Activated naive CD8-positive, alpha-beta T cell treated with anti-CD3 and anti-CD28 coated beads, Interleukin-2, amount 10 ng/mL, durations not matched to agents 7 days and 5 days (primary cell): ENCODE measurements at regions of chr15 and their contacts with region 1.

Region 1: GRCh38 chr15:74382004-74382816 is 14.8 kb upstream of the CYP11A1 start:
- DNase-seq: peak; percentile 89
- ATAC-seq: peak; percentile 45
- H3K4me3 Mint-ChIP-seq: no peak overlapping the region
- H3K27ac Mint-ChIP-seq: peak overlapping the region; percentile 76
- H3K4me1 Mint-ChIP-seq: peaks cover 53% of the 10 kb centered on the region
- H3K27me3 Mint-ChIP-seq: no peaks in the 10 kb centered on the region

Region 2: GRCh38 chr15:74345051-74345450 is 37.2 kb before region 1 on chr15:
- POLR2A ChIA-PET with region 1: no interaction called
- DNase-seq: no peak
- ATAC-seq: no peak
- H3K4me3 Mint-ChIP-seq: no peak overlapping the region
- H3K27ac Mint-ChIP-seq: no peak overlapping the region
- H3K4me1 Mint-ChIP-seq: peaks cover 8% of the 10 kb centered on the region
- H3K27me3 Mint-ChIP-seq: peaks cover 5% of the 10 kb centered on the region

Region 3: DNA sequence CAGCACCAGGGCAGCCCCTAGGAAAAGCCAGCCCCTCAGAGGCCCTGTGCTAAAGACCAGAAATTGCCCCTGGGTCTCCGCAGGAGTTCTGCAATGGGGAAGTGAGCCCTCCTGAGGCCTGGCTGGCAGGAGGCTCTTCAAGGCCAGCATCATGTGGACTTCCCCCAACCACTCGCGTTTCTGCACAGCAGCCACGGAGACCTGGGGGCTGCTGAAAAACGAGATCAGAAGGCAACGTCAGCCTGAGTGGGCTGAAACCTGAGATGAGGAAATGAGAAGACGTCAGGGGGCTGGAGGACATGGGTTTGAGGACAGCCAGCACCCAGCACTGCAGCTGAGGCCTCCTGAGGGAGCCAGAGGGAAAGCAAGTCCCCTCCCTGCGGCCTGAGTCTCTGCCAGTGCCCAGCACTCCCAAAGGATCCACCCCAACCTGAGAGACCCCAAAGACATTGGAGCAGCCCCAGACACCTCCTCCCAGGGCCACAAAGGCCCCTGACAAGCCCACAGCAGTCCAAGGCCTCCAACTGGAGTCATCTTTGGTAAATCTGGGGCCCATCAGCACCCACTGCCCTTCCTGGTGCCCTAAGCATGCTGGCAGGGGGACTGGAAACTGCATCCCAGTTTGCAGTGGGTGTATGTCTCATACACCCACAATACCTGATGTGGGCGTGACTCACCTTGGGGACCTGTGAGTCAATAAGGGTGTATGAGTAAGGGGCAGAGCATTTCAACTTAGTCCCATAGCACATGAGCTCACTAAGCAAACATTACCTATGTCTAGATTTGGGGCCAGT is 14.4 kb after region 1 on chr15:
- POLR2A ChIA-PET with region 1: interaction called, 109 read pairs
- DNase-seq: no peak
- ATAC-seq: no peak
- H3K4me3 Mint-ChIP-seq: no peak overlapping the region
- H3K27ac Mint-ChIP-seq: peak overlapping the region; percentile 90
- H3K4me1 Mint-ChIP-seq: peaks cover 72% of the 10 kb centered on the region
- H3K27me3 Mint-ChIP-seq: no peaks in the 10 kb centered on the region

Region 4: DNA sequence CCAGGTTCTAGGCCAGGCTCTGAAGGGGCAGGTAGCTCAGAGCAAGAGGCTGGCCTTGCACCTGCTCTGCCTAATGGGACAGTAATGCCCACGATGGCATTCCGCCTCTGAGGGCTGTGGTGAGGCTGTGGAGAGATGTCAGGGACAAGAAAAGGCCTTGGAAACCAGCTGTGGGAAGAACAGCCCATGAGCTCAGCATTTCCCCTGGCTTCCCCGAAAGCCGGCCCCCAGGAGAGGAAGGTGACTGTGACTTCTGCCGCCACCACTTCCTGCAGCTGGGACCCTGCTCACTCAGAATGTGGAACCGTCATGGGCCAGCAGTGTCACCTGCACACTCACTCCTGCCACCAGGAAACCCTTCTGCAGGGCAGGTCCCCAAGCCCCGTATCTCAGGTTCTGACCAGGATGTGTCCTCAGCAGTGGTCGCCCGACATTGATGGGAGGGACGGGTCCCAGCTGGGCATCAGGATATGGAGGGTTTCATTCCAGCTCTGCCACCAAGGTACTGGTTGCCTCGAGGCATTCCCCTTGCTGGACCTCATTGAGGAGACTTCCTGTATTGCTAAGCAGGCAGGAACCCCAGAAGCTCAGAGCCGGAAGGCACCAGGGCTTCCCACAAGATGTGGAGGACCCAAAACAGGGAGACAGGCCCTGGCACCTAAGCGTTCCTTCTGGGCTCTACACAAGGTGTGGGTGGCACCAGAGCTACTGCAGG is 20.8 kb after region 1 on chr15:
- POLR2A ChIA-PET with region 1: interaction called, 109 read pairs
- DNase-seq: peak; percentile 82
- ATAC-seq: peak; percentile 75
- H3K4me3 Mint-ChIP-seq: peak overlapping the region; percentile 42
- H3K27ac Mint-ChIP-seq: peak overlapping the region; percentile 87
- H3K4me1 Mint-ChIP-seq: peaks cover 66% of the 10 kb centered on the region
- H3K27me3 Mint-ChIP-seq: no peaks in the 10 kb centered on the region

Region 5: DNA sequence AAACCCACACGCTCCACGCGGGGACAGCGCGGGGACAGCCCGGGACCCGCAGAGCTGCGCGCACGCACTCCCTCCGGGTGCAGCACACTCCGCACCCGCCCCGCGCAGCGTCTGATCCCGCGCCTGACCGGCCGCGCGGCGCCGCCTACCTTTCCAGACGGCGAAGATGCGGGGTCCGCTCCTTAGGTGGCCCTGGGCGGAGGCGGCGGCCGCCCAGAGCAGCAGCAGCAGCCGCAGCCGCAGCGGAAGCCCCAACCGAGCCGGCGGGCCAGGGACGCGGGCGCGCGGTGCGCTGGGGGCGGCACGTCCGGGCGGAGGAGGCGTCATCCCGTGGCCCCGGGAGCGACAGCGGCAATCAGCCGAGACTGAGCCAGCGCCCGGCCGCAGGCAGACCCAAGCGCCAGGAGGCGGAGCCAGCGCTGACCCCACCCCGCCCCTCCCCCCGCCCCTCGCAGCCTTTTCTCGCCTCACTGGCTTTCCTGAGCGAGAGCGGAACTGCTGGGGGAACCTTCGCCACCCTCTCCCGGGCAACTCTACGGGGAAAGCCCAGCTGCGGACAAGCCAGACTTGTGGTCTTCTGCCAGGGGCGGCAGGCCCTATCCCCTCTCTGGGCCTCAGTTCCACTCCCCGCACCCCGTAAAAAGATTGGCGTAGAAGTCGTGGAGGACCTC is 51.5 kb after region 1 on chr15 and contains the start of gene SEMA7A:
- POLR2A ChIA-PET with region 1: interaction called, 67 read pairs
- DNase-seq: peak; percentile 89
- ATAC-seq: peak; percentile 88
- H3K4me3 Mint-ChIP-seq: peak within 1 kb of the TSS; percentile 87
- H3K27ac Mint-ChIP-seq: peak within 1 kb of the TSS; percentile 89
- H3K4me1 Mint-ChIP-seq: peaks cover 60% of the 10 kb centered on the region
- H3K27me3 Mint-ChIP-seq: no peaks in the 10 kb centered on the region
- total RNA-seq, gene SEMA7A: 15.2 to 15.8 TPM

Region 6: DNA sequence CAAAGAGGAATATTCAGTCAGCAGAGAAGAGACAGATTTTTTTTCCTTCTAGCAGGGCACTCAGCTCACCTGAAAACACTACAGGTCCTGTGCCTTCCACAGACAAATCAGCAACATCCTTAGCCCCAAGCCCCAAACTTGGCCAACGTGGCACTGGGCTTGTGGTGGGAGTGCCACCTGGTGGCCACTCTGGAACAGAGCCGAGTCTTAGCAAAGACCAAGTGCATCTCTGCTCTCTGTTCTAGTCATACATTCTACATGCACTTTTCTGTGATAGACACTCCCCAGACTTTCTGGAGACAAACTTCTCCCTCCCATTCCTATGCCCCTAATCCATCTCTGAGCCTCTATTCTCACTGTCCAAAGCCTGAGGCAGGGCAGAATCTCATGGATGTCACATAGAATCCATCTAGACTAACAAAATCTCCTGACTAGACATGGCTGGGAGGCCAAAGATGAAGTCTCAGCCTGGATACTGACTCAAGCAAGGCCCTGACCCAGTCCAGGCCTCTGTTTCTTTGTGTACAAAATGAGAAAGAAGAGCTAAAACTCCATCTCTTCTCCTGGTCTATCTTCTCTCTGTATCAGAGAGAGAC is 56.6 kb after region 1 on chr15:
- POLR2A ChIA-PET with region 1: interaction called, 67 read pairs
- DNase-seq: peak; percentile 84
- ATAC-seq: peak; percentile 73
- H3K4me3 Mint-ChIP-seq: no peak overlapping the region
- H3K27ac Mint-ChIP-seq: peak overlapping the region; percentile 1
- H3K4me1 Mint-ChIP-seq: peaks cover 49% of the 10 kb centered on the region
- H3K27me3 Mint-ChIP-seq: no peaks in the 10 kb centered on the region

Region 7: GRCh38 chr15:74460871-74461846 is 78.9 kb after region 1 on chr15 and contains the start of gene UBL7:
- POLR2A ChIA-PET with region 1: interaction called, 18 read pairs
- DNase-seq: peak; percentile 94
- ATAC-seq: peak; percentile 97
- H3K4me3 Mint-ChIP-seq: peak within 1 kb of the TSS; percentile 92
- H3K27ac Mint-ChIP-seq: peak within 1 kb of the TSS; percentile 78
- H3K4me1 Mint-ChIP-seq: peaks cover 40% of the 10 kb centered on the region
- H3K27me3 Mint-ChIP-seq: no peaks in the 10 kb centered on the region
- total RNA-seq, gene UBL7: 55.3 to 63.2 TPM

Region 8: DNA sequence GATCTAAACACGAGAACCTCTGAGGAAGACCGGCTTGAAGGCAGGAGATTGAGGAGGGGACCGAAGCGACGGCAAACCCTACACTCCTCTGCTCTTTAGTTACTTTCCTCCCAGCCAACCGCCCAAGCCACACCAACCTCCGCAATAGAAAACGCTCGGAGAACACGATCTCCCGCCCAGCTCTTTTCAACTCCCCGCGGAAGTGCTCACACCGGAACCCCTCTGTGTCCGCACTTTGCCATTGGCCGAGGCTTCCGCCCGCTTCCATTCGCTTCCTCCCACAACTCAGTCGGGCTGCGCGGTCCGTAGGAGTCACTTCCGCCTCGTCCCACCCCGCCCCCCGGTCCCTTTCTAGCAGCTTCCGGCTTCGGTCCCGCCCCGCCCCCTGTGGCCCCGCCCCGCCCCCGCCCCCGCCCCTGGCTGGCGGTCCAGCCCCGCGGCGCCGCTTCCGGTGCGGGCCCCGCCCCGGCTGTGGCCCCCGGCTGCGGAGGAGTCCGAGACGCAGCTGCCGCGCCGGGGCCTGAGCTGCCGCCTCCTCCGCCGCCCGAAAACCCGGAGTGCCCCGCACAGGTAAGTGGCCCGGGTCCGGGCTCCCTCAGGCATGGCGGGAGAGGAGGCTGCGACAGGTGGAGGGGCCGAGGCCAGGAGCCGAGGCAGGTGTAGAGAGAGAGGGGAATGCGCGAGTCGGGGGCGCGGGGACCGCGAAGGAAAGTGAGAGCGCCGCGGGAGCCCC is 158.7 kb after region 1 on chr15 and contains the start of gene ARID3B:
- POLR2A ChIA-PET with region 1: interaction called, 27 read pairs
- DNase-seq: peak; percentile 88
- ATAC-seq: peak; percentile 92
- H3K4me3 Mint-ChIP-seq: peak within 1 kb of the TSS; percentile 94
- H3K27ac Mint-ChIP-seq: peak within 1 kb of the TSS; percentile 97
- H3K4me1 Mint-ChIP-seq: peaks cover 42% of the 10 kb centered on the region
- H3K27me3 Mint-ChIP-seq: no peaks in the 10 kb centered on the region
- total RNA-seq, gene ARID3B: 39.4 to 43.0 TPM